Gastrocnemius medialis (tissue), 4 donors: ENCODE measurements at regions of chr5 and their contacts with region 1.

Region 1: GRCh38 chr5:65481635-65482295 is at the start of gene ADAMTS6:
- DNase-seq: peak; percentile 85 to 86
- ATAC-seq: peak; percentile 83 to 86
- H3K4me3 ChIP-seq: peak within 1 kb of the TSS; percentile 65 to 72 (median 68)
- H3K27ac ChIP-seq: peak within 1 kb of the TSS; percentile 84 to 89 (median 86)
- H3K4me1 ChIP-seq: peaks cover 8 to 10% of the 10 kb centered on the region in 2 donors
- H3K27me3 ChIP-seq: no peaks in the 10 kb centered on the region
- CTCF ChIP-seq: no peak
- POLR2A ChIP-seq: peak; percentile 49 to 74
- total RNA-seq, gene ADAMTS6: 0.05 to 0.49 (median 0.31) TPM

Region 2: GRCh38 chr5:64634997-64635686 is 846.6 kb before region 1 on chr5:
- in situ Hi-C with region 1: loop called in 2 of 4 experiments (anchors 25 kb)
- intact Hi-C with region 1: loop called (anchors 2 kb)
- DNase-seq: no peak
- ATAC-seq: peak in 1 of 2 donors; percentile 44
- H3K4me3 ChIP-seq: no peak overlapping the region
- H3K27ac ChIP-seq: no peak overlapping the region
- H3K4me1 ChIP-seq: no peaks in the 10 kb centered on the region
- H3K27me3 ChIP-seq: no peaks in the 10 kb centered on the region
- CTCF ChIP-seq: peak; percentile 51 to 78 (median 70)
- POLR2A ChIP-seq: no peak

Region 3: DNA sequence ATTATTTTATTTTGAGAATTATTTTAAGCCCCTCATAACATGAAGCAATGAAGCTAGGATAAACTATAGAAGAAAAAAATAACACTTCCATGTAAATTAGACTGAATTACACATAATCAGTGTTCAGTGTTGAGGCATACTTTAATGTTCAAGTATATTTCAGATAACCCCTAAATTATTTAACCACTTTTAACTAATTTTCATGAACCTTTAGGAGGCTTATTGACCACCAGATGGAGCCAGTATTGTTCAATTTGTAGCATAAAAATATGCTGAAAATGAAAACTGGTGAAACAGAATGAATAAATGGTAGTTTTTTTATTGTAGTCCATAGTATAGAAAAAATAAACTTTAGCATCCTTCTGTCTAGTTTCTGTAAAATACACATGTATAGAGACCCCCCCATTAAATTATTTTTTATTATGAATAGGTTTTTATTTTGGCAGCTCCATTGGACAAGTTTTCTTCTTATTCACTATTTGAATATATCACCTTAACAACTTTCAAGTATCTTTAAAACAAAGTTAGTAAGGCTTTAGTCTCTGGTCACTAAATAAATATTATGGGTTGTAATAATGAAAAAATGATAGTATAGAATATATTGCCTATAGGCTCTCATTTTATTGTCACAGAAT is 522.9 kb before region 1 on chr5:
- in situ Hi-C with region 1: loop called in 2 of 4 experiments (anchors 10 to 25 kb)
- intact Hi-C with region 1: loop called (anchors 5 kb)
- DNase-seq: no peak
- ATAC-seq: no peak
- H3K4me3 ChIP-seq: no peak overlapping the region
- H3K27ac ChIP-seq: no peak overlapping the region
- H3K4me1 ChIP-seq: no peaks in the 10 kb centered on the region
- H3K27me3 ChIP-seq: no peaks in the 10 kb centered on the region
- CTCF ChIP-seq: peak in 2 of 5 experiments; percentile 28 to 36
- POLR2A ChIP-seq: no peak

Region 4: DNA sequence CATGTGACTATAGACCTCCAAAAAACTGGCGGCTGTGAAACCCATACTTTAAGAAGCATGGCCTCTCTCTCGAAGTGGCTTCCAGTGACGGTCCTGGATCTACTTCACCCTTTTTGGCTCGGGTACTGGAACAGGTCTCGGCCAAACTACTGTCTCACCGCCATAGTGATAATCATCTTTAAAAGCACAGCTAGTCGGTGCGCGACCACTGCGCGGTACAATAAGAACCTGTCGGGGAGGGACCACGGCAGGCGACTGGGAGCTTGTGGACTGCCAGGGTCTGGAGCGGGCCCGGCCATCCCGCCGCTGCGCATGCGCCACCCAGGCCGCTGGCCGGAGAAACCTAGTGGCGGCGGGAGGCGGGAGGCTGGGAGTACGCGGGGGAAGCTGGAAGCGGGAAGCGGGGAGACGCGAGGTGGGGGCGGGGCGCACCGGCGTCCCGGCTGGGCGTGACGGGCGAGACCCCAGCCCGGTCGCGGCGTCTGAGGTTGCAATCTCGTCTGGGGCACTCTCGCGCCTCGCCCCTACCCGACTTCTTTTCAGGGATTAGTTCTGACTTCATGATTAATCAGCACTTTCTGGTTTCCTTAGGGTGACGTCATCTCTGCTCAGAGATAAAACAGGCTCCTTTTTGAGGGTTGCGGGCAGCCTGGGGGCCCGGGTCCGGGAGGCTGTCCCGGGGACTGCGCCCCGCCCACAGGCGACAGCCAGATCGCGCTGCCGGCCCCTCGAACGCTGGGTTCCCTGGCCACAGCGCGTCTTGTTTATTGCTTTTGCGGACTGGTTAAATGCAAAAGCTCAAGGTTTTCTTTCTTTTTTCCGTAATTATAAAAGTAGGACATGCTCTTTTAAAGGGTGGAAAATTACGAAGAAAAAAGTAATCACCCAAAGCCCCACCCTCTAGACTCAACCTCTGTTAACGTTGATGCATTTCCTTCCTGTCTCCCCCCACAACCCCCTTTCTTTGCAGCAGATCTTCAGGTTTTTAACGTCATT is 446.3 kb before region 1 on chr5:
- in situ Hi-C with region 1: no loop called
- intact Hi-C with region 1: loop called (anchors 5 kb)
- DNase-seq: peak; percentile 71 to 83
- ATAC-seq: peak; percentile 90 to 91
- H3K4me3 ChIP-seq: peak overlapping the region; percentile 71 to 84 (median 78)
- H3K27ac ChIP-seq: peak overlapping the region; percentile 78 to 87 (median 86)
- H3K4me1 ChIP-seq: peaks cover 6 to 10% of the 10 kb centered on the region in 2 donors
- H3K27me3 ChIP-seq: no peaks in the 10 kb centered on the region
- CTCF ChIP-seq: peak in 2 of 5 experiments; percentile 28 to 29
- POLR2A ChIP-seq: peak; percentile 27 to 40

Region 5: GRCh38 chr5:65562731-65563701 is 81.3 kb after region 1 on chr5 and contains the starts of genes CENPK and PPWD1:
- in situ Hi-C with region 1: no loop called
- intact Hi-C with region 1: loop called (anchors 2 kb)
- DNase-seq: peak; percentile 90 to 91
- ATAC-seq: peak; percentile 100
- H3K4me3 ChIP-seq: peak within 1 kb of the TSS; percentile 65 to 90 (median 80)
- H3K27ac ChIP-seq: peak within 1 kb of the TSS; percentile 76 to 85 (median 82)
- H3K4me1 ChIP-seq: peaks cover 22 to 24% of the 10 kb centered on the region in 2 donors
- H3K27me3 ChIP-seq: no peaks in the 10 kb centered on the region
- CTCF ChIP-seq: no peak
- POLR2A ChIP-seq: peak; percentile 62 to 63
- total RNA-seq, gene CENPK: 0.56 TPM in 1 of 4 donors, not detected in the others
- total RNA-seq, gene PPWD1: 14.1 to 18.8 (median 16.6) TPM